Endothelial cell of umbilical vein (primary cell): ENCODE measurements at regions of chr12 and their contacts with region 1.

Region 1: GRCh38 chr12:53451661-53452158 is at the start of gene PCBP2:
- DNase-seq: peak; percentile 99
- H3K4me3 ChIP-seq: peak within 1 kb of the TSS; percentile 81 to 100 (median 89)
- H3K27ac ChIP-seq: peak within 1 kb of the TSS; percentile 87
- H3K4me1 ChIP-seq: peaks cover 12% of the 10 kb centered on the region
- H3K27me3 ChIP-seq: no peaks in the 10 kb centered on the region
- CTCF ChIP-seq: peak; percentile 89 to 93
- POLR2A ChIP-seq: no peak
- total RNA-seq, gene PCBP2: 948 and 995 TPM in 2 replicates

Region 2: DNA sequence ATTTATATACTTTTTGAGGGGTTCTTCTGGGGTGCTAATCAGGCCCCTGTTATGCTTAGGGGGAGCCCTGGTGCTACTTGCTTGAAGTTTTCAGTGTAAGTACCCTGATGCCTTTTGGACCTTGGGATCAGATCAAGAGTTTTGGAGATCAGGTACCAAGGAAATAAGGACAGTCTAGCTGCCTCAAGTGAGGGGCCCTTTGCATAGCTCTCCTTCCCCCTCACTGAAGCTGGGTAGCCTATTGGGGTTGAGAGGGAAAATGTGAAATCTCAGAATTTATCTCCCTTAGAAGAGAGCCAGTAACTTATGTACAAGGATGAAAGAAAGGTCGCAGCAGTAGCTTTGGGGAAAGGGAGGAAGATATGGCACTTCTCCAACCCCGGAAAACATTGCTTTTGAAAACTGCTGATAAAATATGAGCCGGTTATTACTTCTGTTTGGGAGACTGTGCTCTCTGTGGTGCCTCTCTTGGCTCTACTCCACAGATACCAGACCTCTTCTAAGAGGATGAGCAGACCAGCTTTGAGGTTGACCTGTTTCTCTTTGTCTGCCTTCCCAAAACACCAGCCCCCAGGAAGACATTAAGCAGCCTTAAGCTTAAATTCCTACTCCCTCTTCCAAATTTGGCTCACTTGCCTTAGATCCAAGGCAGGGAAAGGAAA is 36.8 kb before region 1 on chr12:
- CTCF ChIA-PET with region 1: no interaction called
- POLR2A ChIA-PET with region 1: interaction called, 3 read pairs
- dilution Hi-C with region 1: no loop called
- intact Hi-C with region 1: loop called (anchors 2 kb)
- DNase-seq: peak; percentile 32
- H3K4me3 ChIP-seq: no peak overlapping the region
- H3K27ac ChIP-seq: no peak overlapping the region
- H3K4me1 ChIP-seq: peaks cover 24% of the 10 kb centered on the region
- H3K27me3 ChIP-seq: no peaks in the 10 kb centered on the region
- CTCF ChIP-seq: no peak
- POLR2A ChIP-seq: no peak

Region 3: GRCh38 chr12:53441040-53441833 is 10.5 kb before region 1 on chr12 and contains the start of gene PRR13:
- CTCF ChIA-PET with region 1: interaction called, 5 read pairs
- POLR2A ChIA-PET with region 1: interaction called, 4 read pairs
- dilution Hi-C with region 1: no loop called
- intact Hi-C with region 1: loop called (anchors 1 kb)
- DNase-seq: peak; percentile 99
- H3K4me3 ChIP-seq: peak within 1 kb of the TSS; percentile 65 to 99 (median 96)
- H3K27ac ChIP-seq: peak within 1 kb of the TSS; percentile 65
- H3K4me1 ChIP-seq: peaks cover 12% of the 10 kb centered on the region
- H3K27me3 ChIP-seq: no peaks in the 10 kb centered on the region
- CTCF ChIP-seq: no peak
- POLR2A ChIP-seq: peak; percentile 94
- total RNA-seq, gene PRR13: 123 and 139 TPM in 2 replicates

Region 4: GRCh38 chr12:53465679-53466078 is 14.0 kb after region 1 on chr12:
- CTCF ChIA-PET with region 1: interaction called, 3 read pairs
- POLR2A ChIA-PET with region 1: no interaction called
- dilution Hi-C with region 1: no loop called
- intact Hi-C with region 1: loop called (anchors 2 kb)
- DNase-seq: no peak
- H3K4me3 ChIP-seq: no peak overlapping the region
- H3K27ac ChIP-seq: no peak overlapping the region
- H3K4me1 ChIP-seq: no peaks in the 10 kb centered on the region
- H3K27me3 ChIP-seq: no peaks in the 10 kb centered on the region
- CTCF ChIP-seq: peak in 1 of 2 donors; percentile 1
- POLR2A ChIP-seq: no peak

Region 5: DNA sequence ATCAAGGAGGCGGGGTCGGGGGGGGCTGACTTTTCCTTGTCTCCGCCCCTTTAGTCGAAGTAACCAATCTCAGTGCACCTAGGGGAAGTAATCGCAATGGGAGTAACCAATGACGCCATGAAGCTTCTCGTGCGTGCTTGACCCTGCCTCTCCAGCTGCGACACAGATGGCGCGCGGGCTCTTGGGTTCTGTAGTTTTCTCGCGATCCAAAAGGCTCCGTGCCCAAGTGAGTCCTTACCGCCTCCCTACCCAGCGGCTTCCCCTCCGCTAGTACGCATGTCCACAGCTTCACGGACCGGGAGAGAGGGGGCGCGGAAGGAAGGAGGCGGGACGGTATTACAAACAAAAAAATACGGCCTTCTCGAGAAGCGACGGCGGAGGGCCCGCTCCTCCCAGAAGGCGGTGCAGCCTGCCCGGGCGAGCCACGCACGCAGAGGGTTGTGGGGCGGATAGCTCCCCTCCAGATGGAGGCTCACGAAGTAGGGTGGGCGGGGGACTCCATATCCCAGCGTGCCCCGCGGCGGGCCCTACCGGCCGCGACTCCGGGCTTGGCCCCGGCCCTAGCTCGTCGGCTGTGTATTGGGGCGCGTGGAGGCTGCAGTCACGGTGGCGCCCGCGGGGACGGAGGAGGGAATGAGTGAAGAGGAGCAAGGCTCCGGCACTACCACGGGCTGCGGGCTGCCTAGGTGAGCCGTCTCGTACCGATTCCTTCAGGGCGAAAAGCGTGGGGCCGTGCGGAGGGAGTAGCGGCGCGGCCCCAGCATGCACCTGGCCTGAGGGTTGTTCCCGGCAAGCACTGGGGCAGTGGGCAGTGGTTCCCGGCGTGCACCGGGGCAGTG is 49.3 kb after region 1 on chr12 and contains the start of gene TARBP2:
- CTCF ChIA-PET with region 1: no interaction called
- POLR2A ChIA-PET with region 1: interaction called, 3 read pairs
- dilution Hi-C with region 1: no loop called
- intact Hi-C with region 1: loop called (anchors 2 kb)
- DNase-seq: peak; percentile 100
- H3K4me3 ChIP-seq: peak within 1 kb of the TSS; percentile 2 to 54 (median 49)
- H3K27ac ChIP-seq: peak within 1 kb of the TSS; percentile 52
- H3K4me1 ChIP-seq: peaks cover 32% of the 10 kb centered on the region
- H3K27me3 ChIP-seq: no peaks in the 10 kb centered on the region
- CTCF ChIP-seq: no peak
- POLR2A ChIP-seq: peak; percentile 82
- total RNA-seq, gene TARBP2: 53.8 and 57.2 TPM in 2 replicates